A673 (cell line): ENCODE measurements at regions of chr13 and their contacts with region 1.

Region 1: DNA sequence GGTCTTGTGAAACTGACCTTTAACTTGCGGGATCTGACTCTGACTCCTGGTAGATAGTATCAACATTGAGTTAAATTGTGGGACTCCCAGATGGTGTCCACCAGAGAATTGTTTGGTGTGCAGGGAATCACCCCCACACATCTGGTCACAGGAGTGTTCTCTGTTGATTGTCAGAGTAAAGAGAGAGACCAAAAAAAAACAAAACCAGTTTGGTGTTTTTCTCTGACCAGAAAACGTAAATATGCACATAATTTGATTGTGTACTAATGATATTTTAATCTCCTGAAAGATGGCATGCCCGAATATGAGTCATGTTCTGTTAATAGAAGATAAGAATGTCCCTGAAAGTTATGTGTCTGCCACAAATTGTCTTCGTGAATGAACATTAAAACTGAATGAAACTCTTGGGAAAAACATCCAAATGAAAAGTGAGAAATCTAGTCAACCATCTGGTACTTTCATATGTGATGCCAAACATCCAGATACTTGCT is 118.5 kb upstream of the GPC6 start:
- DNase-seq: no peak
- H3K4me3 ChIP-seq: no peak overlapping the region
- H3K27ac ChIP-seq: no peak overlapping the region
- H3K4me1 ChIP-seq: no peaks in the 10 kb centered on the region
- H3K27me3 ChIP-seq: no peaks in the 10 kb centered on the region
- CTCF ChIP-seq: no peak

Region 2: GRCh38 chr13:92912629-92913028 is 195.5 kb before region 1 on chr13:
- CTCF ChIA-PET with region 1: no interaction called
- POLR2A ChIA-PET with region 1: no interaction called
- intact Hi-C with region 1: no loop called
- DNase-seq: no peak
- H3K4me3 ChIP-seq: no peak overlapping the region
- H3K27ac ChIP-seq: no peak overlapping the region
- H3K4me1 ChIP-seq: no peaks in the 10 kb centered on the region
- H3K27me3 ChIP-seq: no peaks in the 10 kb centered on the region
- CTCF ChIP-seq: no peak

Region 3: DNA sequence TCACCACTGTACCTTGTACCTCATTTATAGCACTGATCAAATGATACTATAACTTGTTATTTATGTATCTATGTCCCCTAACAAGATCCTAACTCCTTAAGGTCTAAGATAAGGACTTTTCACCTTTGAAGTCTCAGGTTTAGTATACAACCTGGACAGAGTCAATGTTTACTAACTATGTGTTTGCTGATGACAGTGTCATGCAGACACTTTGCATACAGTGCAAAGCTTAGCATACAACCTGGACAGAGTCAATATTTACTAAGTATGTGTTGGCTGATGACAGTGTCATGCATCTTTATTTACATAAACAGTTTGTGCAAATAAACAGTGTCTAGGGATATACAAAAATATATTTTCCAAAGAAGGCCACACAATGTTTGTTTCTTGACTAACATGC is 1336.6 kb after region 1 on chr13:
- CTCF ChIA-PET with region 1: no interaction called
- POLR2A ChIA-PET with region 1: interaction called, 13 read pairs
- intact Hi-C with region 1: no loop called
- DNase-seq: no peak
- H3K4me3 ChIP-seq: no peak overlapping the region
- H3K27ac ChIP-seq: no peak overlapping the region
- H3K4me1 ChIP-seq: no peaks in the 10 kb centered on the region
- H3K27me3 ChIP-seq: no peaks in the 10 kb centered on the region
- CTCF ChIP-seq: no peak